Endothelial cell of umbilical vein (primary cell): ENCODE measurements at regions of chr3 and their contacts with region 1.

Region 1: DNA sequence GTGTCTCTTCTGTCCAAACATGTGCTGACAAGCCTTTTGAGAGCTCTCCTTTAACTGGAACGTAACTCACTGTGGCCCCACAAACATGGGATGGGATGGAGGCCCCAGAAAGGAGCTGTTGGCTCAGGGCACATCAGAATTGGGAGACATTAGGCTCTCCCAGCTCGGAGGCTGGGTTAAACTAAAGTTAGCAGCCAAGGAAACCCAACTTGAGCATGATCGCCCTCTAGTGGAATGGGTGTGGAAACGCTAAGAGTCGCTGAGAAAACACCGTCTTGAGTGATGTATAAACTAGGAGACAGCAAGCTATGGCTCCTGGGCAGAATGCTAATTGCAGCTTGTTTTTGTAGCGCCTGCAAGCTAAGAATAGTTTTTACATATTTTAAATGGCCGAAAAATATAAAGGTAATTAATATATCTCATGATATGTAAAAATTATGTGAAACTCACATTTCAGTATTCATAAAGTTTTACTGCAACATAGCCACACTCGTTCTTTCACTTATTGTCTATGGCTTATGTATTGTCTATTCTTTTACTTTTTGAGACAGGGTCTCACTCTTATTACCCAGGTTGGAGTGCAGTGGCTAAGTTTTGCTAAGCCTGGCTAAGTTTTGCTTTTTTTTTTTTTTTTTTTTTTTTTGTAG is 138.8 kb upstream of the HACD2 start:
- DNase-seq: peak; percentile 78
- H3K4me3 ChIP-seq: no peak overlapping the region
- H3K27ac ChIP-seq: no peak overlapping the region
- H3K4me1 ChIP-seq: no peaks in the 10 kb centered on the region
- H3K27me3 ChIP-seq: peaks cover 2 to 13% of the 10 kb centered on the region in 2 experiments
- CTCF ChIP-seq: peak; percentile 84
- POLR2A ChIP-seq: no peak

Region 2: DNA sequence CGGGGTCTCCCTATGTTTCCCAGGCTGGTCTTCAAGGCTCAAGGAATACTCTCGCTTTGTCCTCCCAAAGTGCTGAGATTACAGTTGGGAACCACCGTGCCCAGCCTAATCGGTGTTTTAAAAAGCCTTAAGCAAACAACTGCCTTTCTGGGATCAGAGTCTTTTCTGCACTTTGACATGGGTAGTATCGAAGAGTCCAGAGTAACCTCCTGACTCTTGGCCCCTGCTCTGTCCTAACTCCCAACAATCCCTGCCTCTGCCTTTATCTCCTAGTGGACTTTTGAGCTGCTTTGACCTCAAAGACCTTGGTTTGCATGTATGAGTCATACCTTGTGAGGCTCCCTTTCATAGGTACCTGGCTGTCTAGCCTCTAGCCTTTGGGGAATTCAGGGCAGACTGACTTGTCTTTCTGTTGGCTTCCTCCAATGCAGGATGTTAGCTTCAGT is 117.8 kb before region 1 on chr3:
- CTCF ChIA-PET with region 1: no interaction called
- POLR2A ChIA-PET with region 1: no interaction called
- dilution Hi-C with region 1: no loop called
- intact Hi-C with region 1: no loop called
- DNase-seq: no peak
- H3K4me3 ChIP-seq: no peak overlapping the region
- H3K27ac ChIP-seq: no peak overlapping the region
- H3K4me1 ChIP-seq: peaks cover 7% of the 10 kb centered on the region
- H3K27me3 ChIP-seq: no peaks in the 10 kb centered on the region
- CTCF ChIP-seq: no peak
- POLR2A ChIP-seq: no peak

Region 3: GRCh38 chr3:123652346-123652984 is 71.2 kb before region 1 on chr3:
- CTCF ChIA-PET with region 1: interaction called, 199 read pairs
- POLR2A ChIA-PET with region 1: no interaction called
- dilution Hi-C with region 1: no loop called
- intact Hi-C with region 1: loop called (anchors 1 kb)
- DNase-seq: peak; percentile 75
- H3K4me3 ChIP-seq: no peak overlapping the region
- H3K27ac ChIP-seq: no peak overlapping the region
- H3K4me1 ChIP-seq: peaks cover 17% of the 10 kb centered on the region
- H3K27me3 ChIP-seq: no peaks in the 10 kb centered on the region
- CTCF ChIP-seq: peak; percentile 85 to 93
- POLR2A ChIP-seq: no peak

Region 4: DNA sequence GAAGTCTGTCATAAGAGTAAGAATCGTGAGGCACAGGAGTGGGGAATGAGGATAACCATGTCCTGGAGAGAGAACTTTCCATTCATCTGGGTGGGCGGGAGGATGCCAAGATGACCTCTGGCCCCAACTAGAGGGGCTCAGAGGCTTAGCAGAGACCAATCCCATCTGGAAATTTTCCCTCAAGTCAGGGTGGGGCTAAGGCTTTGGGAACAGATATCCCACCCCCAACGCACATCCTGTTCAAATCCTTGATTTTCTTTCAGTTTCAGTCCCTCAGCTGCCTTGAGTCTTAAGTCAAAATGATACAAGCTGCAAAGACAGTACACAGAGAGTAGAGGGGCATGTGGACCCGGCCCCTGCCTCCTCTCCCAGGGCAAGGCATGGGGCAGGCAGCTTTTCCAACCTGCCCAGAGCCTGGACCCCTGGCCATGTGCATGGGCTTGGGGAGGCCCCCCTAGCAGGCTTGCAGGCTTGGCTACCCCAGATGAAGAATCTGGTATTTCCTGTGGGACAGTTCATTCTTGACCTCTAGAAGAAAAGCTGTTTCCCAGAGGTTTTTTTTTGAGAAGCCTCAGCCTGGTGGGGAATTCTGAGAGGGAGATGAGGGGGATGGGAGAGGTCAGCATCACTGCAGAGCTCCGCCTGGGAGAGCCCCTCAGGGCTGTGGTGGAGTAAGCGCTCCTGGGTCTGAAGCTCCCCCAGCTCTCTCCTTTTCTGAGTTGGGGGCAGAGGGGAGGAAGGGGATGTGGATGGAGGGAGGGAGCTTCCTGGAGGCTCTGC is 29.1 kb before region 1 on chr3:
- CTCF ChIA-PET with region 1: interaction called, 17 read pairs
- POLR2A ChIA-PET with region 1: no interaction called
- dilution Hi-C with region 1: no loop called
- intact Hi-C with region 1: no loop called
- DNase-seq: peak; percentile 21
- H3K4me3 ChIP-seq: no peak overlapping the region
- H3K27ac ChIP-seq: no peak overlapping the region
- H3K4me1 ChIP-seq: peaks cover 49% of the 10 kb centered on the region
- H3K27me3 ChIP-seq: no peaks in the 10 kb centered on the region
- CTCF ChIP-seq: no peak
- POLR2A ChIP-seq: no peak

Region 5: GRCh38 chr3:123706871-123707270 is 16.8 kb before region 1 on chr3:
- CTCF ChIA-PET with region 1: interaction called, 17 read pairs
- POLR2A ChIA-PET with region 1: no interaction called
- dilution Hi-C with region 1: no loop called
- intact Hi-C with region 1: loop called (anchors 1 kb)
- DNase-seq: no peak
- H3K4me3 ChIP-seq: no peak overlapping the region
- H3K27ac ChIP-seq: no peak overlapping the region
- H3K4me1 ChIP-seq: no peaks in the 10 kb centered on the region
- H3K27me3 ChIP-seq: no peaks in the 10 kb centered on the region
- CTCF ChIP-seq: no peak
- POLR2A ChIP-seq: no peak

Region 6: DNA sequence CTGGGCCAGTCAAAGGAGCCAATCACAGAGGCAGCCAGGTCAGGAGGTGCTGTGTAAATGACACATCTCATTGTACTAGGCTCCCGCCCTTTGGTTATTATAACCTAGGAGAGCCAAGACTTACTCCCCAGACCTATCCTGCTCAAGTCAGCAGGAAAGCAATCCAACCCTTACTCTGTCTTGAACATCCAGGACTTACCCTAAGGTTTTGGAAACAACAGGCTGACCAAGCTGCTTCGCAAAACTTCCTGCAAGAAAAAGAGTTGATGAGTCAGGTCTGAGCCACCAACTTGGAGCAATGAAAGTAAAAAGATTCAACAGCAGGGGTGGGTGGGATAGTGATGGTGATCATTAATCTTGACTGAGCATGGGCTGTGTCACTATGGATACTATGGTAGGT is 16.1 kb after region 1 on chr3:
- CTCF ChIA-PET with region 1: interaction called, 24 read pairs
- POLR2A ChIA-PET with region 1: no interaction called
- dilution Hi-C with region 1: no loop called
- intact Hi-C with region 1: no loop called
- DNase-seq: no peak
- H3K4me3 ChIP-seq: no peak overlapping the region
- H3K27ac ChIP-seq: no peak overlapping the region
- H3K4me1 ChIP-seq: no peaks in the 10 kb centered on the region
- H3K27me3 ChIP-seq: peaks cover 0 to 2% of the 10 kb centered on the region in 2 experiments
- CTCF ChIP-seq: no peak
- POLR2A ChIP-seq: no peak

Region 7: DNA sequence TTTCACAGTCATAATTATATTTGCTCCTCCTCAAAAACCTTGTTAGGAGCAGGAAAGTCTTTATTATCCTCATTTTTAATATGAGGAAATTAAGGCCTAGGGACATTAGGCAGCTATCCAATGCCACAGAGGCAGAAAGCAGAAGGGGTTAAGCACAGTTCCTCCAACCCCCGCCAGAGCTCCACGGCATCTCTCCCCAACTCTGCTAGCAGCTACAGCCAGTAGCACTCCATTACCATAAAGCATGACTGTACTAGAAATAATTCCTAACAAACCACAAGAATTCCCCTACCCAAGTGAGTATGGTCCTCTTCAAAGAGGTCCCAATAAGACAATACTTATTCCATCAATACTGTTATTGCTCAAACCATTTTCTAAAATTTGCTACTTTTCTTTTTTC is 1322.3 kb after region 1 on chr3:
- CTCF ChIA-PET with region 1: no interaction called
- POLR2A ChIA-PET with region 1: no interaction called
- dilution Hi-C with region 1: no loop called
- intact Hi-C with region 1: no loop called
- DNase-seq: no peak
- H3K4me3 ChIP-seq: no peak overlapping the region
- H3K27ac ChIP-seq: no peak overlapping the region
- H3K4me1 ChIP-seq: peaks cover 36% of the 10 kb centered on the region
- H3K27me3 ChIP-seq: no peaks in the 10 kb centered on the region
- CTCF ChIP-seq: no peak
- POLR2A ChIP-seq: no peak